Activated T-helper 1 cell treated with anti-CD3 and anti-CD28 coated beads, Interleukin-12 subunit alpha, Interleukin-12 subunit beta, Interleukin-2, Interleukin-4 antibody, amounts not matched to agents 30 ng/mL and 10 ng/mL and 1 ng/mL, durations not matched to agents 14 hours and 24 hours and 36 hours (primary cell): ENCODE measurements at regions of chr17 and their contacts with region 1.

Region 1: DNA sequence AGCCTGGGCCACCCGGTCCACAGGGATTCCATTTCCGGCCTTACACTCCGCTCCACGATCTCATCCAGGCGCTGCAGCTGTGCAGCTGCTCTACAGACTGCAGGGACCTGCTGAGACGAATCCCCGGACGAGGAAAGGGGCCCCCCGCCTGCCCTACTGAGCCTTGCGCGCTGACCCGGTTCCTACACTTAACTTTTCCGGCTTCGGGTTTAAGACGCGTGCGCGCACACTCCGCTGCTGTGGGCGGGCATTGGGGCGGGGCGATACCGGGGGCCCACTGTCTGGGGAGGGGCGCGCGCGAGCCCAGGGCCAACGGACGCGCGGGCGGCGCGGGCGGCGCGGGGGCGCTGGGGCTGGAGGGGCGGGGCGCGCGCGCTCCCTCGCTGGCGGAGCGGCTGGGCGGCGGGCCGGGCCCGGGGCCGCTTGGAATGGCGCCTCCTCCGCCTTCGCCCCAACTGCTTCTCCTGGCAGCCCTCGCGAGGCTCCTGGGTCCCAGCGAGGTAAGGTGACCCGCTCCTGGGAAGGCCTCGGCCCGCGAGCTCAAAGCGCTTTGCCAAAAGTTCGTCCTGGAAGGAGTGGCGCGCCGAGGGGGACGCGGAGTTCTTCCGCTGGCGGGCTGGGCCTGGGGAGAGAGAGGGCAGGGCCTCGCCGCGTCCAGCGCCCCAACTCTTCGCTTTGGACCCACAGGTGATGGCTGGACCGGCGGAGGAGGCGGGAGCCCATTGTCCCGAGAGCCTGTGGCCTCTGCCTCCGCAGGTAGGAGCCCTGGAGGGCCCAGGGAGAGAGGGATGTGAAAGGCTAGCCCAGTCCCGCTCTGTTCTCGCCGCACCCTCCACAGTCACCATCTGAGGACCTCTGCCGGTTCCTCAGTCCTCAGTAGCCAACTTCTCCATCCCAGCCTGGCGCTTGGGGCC is at the start of gene TP53I13:
- DNase-seq: peak; percentile 87
- H3K4me3 Mint-ChIP-seq: peak within 1 kb of the TSS; percentile 89
- H3K27ac Mint-ChIP-seq: peak within 1 kb of the TSS; percentile 95
- H3K4me1 Mint-ChIP-seq: peaks cover 20% of the 10 kb centered on the region
- H3K27me3 Mint-ChIP-seq: peaks cover 1% of the 10 kb centered on the region
- total RNA-seq, gene TP53I13: 67.4 and 71.8 TPM in 2 replicates

Region 2: DNA sequence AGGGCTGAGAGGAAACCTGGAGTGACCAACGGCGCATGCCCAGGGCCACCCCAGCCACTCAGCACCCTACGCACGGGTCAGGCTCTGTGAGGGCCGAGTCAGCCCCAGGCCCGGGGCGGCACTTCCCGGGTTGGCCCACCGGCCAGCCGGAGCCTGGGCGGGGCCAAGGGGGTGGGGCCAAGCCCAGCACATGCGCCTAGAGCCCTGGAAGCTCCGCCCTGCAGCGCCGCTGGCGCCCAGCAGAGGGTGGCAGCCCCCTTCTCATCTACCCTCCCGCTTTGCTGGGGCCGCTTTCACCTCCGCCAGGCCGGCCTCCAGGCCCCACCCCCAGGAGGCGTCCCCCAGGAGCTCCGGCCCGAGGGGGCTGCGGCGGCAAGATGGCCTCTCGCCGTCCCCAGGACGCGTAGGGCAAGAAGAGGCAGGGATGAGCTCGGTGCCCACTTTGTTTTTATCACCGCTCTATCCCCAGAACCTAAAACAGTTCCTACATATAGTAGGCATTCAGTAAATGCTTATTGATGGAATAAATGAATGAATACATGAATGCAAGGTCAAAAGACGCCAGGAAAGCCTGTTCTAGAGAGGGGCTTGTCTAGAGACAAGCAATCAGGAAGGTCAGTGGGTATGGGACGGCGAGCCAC is 419.7 kb before region 1 on chr17:
- intact Hi-C with region 1: loop called (anchors 5 kb)
- DNase-seq: peak; percentile 91
- H3K4me3 Mint-ChIP-seq: peak overlapping the region; percentile 79
- H3K27ac Mint-ChIP-seq: peak overlapping the region; percentile 64
- H3K4me1 Mint-ChIP-seq: peaks cover 63% of the 10 kb centered on the region
- H3K27me3 Mint-ChIP-seq: no peaks in the 10 kb centered on the region

Region 3: GRCh38 chr17:29369831-29370735 is 198.5 kb before region 1 on chr17:
- intact Hi-C with region 1: loop called (anchors 1 kb)
- DNase-seq: peak; percentile 30
- H3K4me3 Mint-ChIP-seq: no peak overlapping the region
- H3K27ac Mint-ChIP-seq: no peak overlapping the region
- H3K4me1 Mint-ChIP-seq: no peaks in the 10 kb centered on the region
- H3K27me3 Mint-ChIP-seq: peaks cover 5% of the 10 kb centered on the region

Region 4: GRCh38 chr17:29389982-29390850 is 178.4 kb before region 1 on chr17 and contains the start of gene TAOK1:
- intact Hi-C with region 1: loop called (anchors 1 kb)
- DNase-seq: peak; percentile 97
- H3K4me3 Mint-ChIP-seq: peak within 1 kb of the TSS; percentile 98
- H3K27ac Mint-ChIP-seq: peak within 1 kb of the TSS; percentile 95
- H3K4me1 Mint-ChIP-seq: peaks cover 43% of the 10 kb centered on the region
- H3K27me3 Mint-ChIP-seq: no peaks in the 10 kb centered on the region
- total RNA-seq, gene TAOK1: 45.9 and 46.9 TPM in 2 replicates

Region 5: DNA sequence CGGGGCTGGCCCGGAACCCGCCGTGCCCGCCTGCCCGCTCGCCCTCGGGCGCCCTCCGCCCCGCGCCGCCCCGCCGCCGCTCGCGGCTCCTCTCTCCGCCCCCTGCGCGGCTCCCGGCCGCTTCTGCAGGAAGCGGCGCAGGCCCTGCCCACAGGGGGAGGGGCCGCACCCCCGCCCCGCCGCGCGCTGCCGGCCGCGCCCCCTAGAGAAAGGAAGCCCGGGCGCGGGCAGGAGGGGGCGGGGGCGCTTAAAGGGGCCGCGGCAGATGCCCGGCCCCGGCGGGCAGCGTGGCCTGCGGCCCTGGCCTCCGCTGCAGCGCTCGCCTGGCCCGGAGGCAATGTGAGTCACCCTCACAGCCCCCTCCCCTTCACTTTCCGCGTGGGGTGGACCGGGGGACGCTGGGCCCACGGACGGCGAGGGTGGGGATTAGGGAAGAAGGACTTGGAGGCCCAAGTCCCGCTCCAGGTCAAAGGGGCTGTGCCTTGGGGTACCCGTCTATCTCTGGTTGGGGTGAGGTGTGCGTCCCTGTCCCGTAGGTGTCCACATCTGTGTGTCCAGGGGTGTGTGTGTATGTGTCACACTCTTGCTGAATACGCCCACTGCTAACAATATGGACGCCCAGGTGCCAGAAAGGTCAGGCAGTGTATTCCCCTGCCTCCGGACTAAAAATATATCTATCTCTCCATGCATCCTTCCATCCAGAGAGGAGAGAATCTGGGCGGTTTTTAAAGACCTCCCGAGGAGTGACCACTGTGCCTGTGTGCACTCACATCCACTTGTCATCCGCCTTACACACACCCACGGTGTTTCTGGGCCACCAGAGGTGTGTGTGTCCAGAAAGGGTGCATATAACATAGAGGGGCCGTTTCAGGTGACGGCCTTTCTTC is 21.2 kb after region 1 on chr17 and contains the start of gene GIT1:
- intact Hi-C with region 1: loop called (anchors 1 kb)
- DNase-seq: peak; percentile 84
- H3K4me3 Mint-ChIP-seq: peak within 1 kb of the TSS; percentile 96
- H3K27ac Mint-ChIP-seq: peak within 1 kb of the TSS; percentile 87
- H3K4me1 Mint-ChIP-seq: peaks cover 63% of the 10 kb centered on the region
- H3K27me3 Mint-ChIP-seq: no peaks in the 10 kb centered on the region
- total RNA-seq, gene GIT1: 81.0 and 87.5 TPM in 2 replicates

Region 6: GRCh38 chr17:29617125-29617480 is 48.5 kb after region 1 on chr17:
- intact Hi-C with region 1: loop called (anchors 1 kb)
- DNase-seq: peak; percentile 86
- H3K4me3 Mint-ChIP-seq: peak overlapping the region; percentile 81
- H3K27ac Mint-ChIP-seq: peak overlapping the region; percentile 66
- H3K4me1 Mint-ChIP-seq: peaks cover 40% of the 10 kb centered on the region
- H3K27me3 Mint-ChIP-seq: peaks cover 8% of the 10 kb centered on the region

Region 7: GRCh38 chr17:29633886-29634285 is 65.3 kb after region 1 on chr17:
- intact Hi-C with region 1: no loop called
- DNase-seq: no peak
- H3K4me3 Mint-ChIP-seq: no peak overlapping the region
- H3K27ac Mint-ChIP-seq: peak overlapping the region; percentile 24
- H3K4me1 Mint-ChIP-seq: peaks cover 23% of the 10 kb centered on the region
- H3K27me3 Mint-ChIP-seq: no peaks in the 10 kb centered on the region

Region 8: DNA sequence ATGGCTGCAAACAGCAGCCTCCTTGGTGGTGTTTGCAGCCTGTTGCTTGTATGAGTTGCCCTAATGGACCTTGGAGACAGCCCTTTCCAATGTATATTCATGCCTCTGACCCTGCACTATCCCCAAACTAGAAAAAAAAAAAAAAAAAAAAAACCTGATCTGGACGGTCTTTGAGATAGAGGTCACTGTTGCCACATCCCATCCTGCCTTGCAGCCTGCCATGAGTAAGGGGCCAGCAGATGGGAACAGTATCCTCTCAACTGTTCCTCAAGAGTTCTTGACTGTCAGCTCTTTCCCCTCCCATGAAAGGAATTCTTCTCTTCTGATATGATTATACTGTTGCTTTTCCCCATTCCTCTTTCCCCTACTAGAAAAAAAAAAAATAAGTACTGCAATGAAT is 209.1 kb after region 1 on chr17:
- intact Hi-C with region 1: loop called (anchors 5 kb)
- DNase-seq: no peak
- H3K4me3 Mint-ChIP-seq: no peak overlapping the region
- H3K27ac Mint-ChIP-seq: no peak overlapping the region
- H3K4me1 Mint-ChIP-seq: peaks cover 16% of the 10 kb centered on the region
- H3K27me3 Mint-ChIP-seq: no peaks in the 10 kb centered on the region